Breast epithelium (tissue), 4 donors: ENCODE measurements at regions of chr1 and their contacts with region 1.

Region 1: GRCh38 chr1:229558571-229559335 is at the start of gene ABCB10:
- DNase-seq: peak; percentile 90 to 91
- H3K4me3 ChIP-seq: peak within 1 kb of the TSS; percentile 73 to 80 (median 73)
- H3K27ac ChIP-seq: peak within 1 kb of the TSS; percentile 82 to 87
- H3K4me1 ChIP-seq: peaks cover 0 to 14% of the 10 kb centered on the region in 2 donors
- H3K27me3 ChIP-seq: no peaks in the 10 kb centered on the region
- CTCF ChIP-seq: peak; percentile 47 to 75 (median 60)
- POLR2A ChIP-seq: no peak
- total RNA-seq, gene ABCB10: 13.8 to 18.6 (median 17.0) TPM

Region 2: DNA sequence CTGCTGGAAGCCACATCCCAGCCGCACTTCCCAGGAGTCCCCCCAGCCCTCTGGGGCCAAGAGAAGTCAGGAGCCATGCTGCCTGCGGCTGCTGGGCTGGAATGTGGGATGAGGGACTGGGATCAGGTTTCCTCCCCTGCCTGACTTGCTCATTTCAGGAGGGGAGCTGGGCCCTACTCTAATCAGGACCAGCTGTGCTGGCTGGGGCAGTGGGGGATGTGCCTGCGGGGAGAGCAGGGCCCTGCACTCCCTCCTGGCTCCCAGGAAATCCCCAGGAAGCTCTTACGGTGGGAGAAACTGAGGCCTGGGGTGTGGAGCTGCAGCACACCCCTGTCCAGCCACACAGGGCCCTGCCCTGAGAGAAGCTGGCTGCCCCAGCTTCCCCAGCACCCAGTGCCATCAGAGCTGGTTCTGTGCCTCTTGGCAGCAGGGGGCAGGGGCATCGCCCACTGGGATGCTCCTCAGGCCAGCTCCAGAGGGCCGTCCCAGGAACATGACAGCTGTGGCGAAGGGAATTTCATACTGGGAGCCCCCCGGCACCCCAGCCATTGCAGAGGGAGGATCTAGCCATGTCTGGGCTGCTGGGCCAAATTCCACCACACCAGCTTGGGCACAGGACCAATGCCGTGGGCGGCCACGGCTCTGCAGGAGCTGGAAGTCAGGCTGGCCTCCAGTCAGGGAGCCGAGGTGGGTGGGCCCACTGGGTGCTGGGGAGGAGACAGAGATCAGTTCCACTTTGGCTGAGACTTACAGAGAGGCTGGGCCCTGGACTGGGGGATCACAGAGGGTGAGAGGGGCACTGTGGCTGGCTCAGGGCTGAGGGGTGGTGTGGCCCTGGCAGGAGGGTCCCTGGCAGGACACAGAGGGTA is 1764.6 kb before region 1 on chr1:
- intact Hi-C with region 1: no loop called
- DNase-seq: peak in 1 of 2 donors; percentile 71
- H3K4me3 ChIP-seq: peak overlapping the region in 2 of 3 donors; percentile 5 to 51
- H3K27ac ChIP-seq: peak overlapping the region; percentile 60 to 71
- H3K4me1 ChIP-seq: peaks cover 4 to 14% of the 10 kb centered on the region in 2 donors
- H3K27me3 ChIP-seq: no peaks in the 10 kb centered on the region
- CTCF ChIP-seq: no peak
- POLR2A ChIP-seq: no peak

Region 3: GRCh38 chr1:228510101-228510802 is 1048.5 kb before region 1 on chr1:
- intact Hi-C with region 1: no loop called
- DNase-seq: peak in 1 of 2 donors; percentile 16
- H3K4me3 ChIP-seq: no peak overlapping the region
- H3K27ac ChIP-seq: no peak overlapping the region
- H3K4me1 ChIP-seq: no peaks in the 10 kb centered on the region
- H3K27me3 ChIP-seq: no peaks in the 10 kb centered on the region
- CTCF ChIP-seq: no peak
- POLR2A ChIP-seq: no peak

Region 4: DNA sequence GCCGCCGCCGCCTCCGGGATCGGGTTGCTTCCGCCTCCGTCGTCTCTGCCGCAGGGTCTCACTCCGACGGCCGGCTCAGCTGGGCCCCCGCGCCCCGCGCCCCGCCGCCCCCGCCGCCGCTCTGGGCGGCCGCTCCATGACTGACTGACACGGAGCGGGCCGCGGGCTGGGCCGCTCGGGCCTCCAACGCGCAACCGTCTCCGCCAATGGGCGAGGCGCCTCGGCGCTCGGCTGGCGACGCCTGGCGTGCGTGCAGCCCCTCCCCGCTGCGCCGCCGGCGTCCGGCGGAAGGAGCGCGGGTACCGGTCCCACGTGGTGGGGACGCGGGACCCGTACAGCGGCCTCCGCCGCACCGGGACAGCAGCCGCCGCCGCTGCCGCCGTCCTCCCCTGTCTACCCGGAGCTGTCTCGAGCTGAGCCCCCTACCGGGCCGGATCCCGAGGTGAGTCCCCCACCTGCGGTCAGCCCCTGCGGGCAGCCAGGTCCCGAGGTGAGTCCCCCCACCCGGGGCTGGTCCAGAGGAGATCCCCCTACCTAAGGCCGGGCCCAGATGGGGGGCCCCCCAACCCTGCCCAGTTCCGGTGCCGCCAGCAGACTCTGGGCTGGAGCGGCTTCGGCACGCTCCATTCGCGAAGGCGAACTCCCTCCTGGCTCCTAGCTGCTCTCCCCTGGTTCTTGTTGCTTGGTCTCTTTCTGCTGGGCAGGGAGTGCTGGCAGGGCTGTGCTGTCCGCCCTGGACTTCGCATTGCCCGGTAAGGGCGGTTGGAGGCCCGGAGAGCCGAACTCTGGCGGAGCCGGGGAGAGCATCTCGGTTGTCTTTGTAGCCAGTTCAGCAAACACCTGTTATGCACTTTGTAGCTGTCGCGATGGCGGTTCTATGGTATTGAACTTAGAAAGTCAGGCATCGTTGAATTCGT is 67.4 kb after region 1 on chr1 and contains the starts of genes TAF5L and URB2:
- intact Hi-C with region 1: loop called (anchors 10 kb)
- DNase-seq: peak; percentile 73 to 80
- H3K4me3 ChIP-seq: peak within 1 kb of the TSS; percentile 78 to 96 (median 93)
- H3K27ac ChIP-seq: peak within 1 kb of the TSS; percentile 80 to 96
- H3K4me1 ChIP-seq: peaks cover 0 to 17% of the 10 kb centered on the region in 2 donors
- H3K27me3 ChIP-seq: no peaks in the 10 kb centered on the region
- CTCF ChIP-seq: no peak
- POLR2A ChIP-seq: no peak
- total RNA-seq, gene TAF5L: 15.4 to 18.3 (median 16.3) TPM
- total RNA-seq, gene URB2: 9.3 to 14.1 (median 12.7) TPM

Region 5: GRCh38 chr1:230594214-230594773 is 1035.5 kb after region 1 on chr1:
- intact Hi-C with region 1: no loop called
- DNase-seq: no peak
- H3K4me3 ChIP-seq: no peak overlapping the region
- H3K27ac ChIP-seq: no peak overlapping the region
- H3K4me1 ChIP-seq: no peaks in the 10 kb centered on the region
- H3K27me3 ChIP-seq: peaks cover 0 to 8% of the 10 kb centered on the region in 2 donors
- CTCF ChIP-seq: no peak
- POLR2A ChIP-seq: no peak

Region 6: GRCh38 chr1:231478800-231479199 is 1920.0 kb after region 1 on chr1:
- intact Hi-C with region 1: no loop called
- DNase-seq: no peak
- H3K4me3 ChIP-seq: no peak overlapping the region
- H3K27ac ChIP-seq: no peak overlapping the region
- H3K4me1 ChIP-seq: no peaks in the 10 kb centered on the region
- H3K27me3 ChIP-seq: no peaks in the 10 kb centered on the region
- CTCF ChIP-seq: no peak
- POLR2A ChIP-seq: no peak